Dorsolateral prefrontal cortex (tissue), 120 donors: ENCODE measurements at regions of chr15 and their contacts with region 1.

Region 1: GRCh38 chr15:89874926-89875564 is 18.7 kb downstream of the AP3S2 start:
- DNase-seq: peak; percentile 72 to 90 (median 82)
- H3K4me3 ChIP-seq: no peak overlapping the region
- H3K27ac ChIP-seq: peak overlapping the region in 1 of 59 donors; percentile 16
- H3K27me3 ChIP-seq: no peaks in the 10 kb centered on the region
- CTCF ChIP-seq: peak; percentile 64 to 98 (median 91)

Region 2: DNA sequence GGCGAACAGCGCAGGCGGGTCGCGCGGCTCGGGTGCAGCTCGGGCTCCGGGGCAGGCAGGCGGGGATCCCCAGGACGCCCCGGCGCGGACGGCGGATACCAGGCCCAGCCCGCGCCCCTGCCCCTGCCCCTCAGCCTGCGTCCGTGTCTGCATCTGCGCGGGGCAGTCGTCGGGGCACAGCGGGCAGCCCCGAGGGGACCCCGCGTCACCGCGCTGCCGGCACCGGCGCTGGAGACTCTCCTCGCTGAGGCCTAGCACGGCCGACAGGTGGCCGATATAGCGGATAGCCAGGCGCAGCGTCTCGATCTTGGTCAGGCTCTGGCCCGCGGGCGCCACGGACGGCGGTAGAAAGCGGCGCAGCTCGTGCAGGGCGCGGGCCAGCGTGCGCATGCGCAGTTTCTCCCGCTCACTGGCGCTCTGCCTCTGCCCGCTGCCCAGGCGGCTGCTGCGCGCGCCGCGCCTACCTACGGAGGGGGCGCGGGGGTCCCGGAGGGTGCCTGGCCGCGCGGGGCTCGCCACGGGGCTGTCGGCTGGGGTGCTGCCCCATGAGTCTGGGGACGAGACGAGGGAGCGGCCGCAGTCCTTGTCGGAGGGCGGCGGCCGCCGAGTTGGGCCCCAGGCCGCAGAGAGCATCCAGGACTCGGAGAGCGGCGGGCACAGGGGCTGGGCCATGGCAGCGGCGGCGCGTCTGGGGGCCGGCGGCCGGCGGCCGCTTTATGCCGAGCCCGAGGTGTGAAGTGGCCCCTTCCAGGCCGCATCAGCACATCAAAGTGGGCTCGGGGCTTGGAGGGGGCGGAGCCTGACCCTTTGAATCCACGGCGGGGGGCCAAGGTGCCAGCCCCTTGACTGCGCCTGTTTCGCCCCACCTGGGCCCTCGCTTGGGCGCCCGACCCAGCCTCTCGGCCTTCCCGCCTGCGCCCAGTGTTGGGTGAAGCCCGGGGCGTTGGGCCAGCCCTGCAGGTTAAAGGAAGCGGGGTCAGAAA is 124.2 kb before region 1 on chr15 and contains the start of gene MESP1:
- intact Hi-C with region 1: loop called in 1 of 2 experiments (anchors 5 kb)
- DNase-seq: peak; percentile 76 to 94 (median 88)
- H3K4me3 ChIP-seq: peak within 1 kb of the TSS; percentile 65 to 92 (median 77)
- H3K27ac ChIP-seq: peak within 1 kb of the TSS in 50 of 59 donors; percentile 7 to 91 (median 74)
- H3K27me3 ChIP-seq: no peaks in the 10 kb centered on the region
- CTCF ChIP-seq: peak; percentile 34 to 85 (median 68)
- total RNA-seq, gene MESP1: 5.5 to 23.3 (median 13.3) TPM

Region 3: GRCh38 chr15:89760303-89761008 is 114.6 kb before region 1 on chr15:
- intact Hi-C with region 1: loop called in 1 of 2 experiments (anchors 5 kb)
- DNase-seq: peak in 9 of 10 donors; percentile 38 to 82 (median 74)
- H3K4me3 ChIP-seq: no peak overlapping the region
- H3K27ac ChIP-seq: no peak overlapping the region
- H3K27me3 ChIP-seq: no peaks in the 10 kb centered on the region
- CTCF ChIP-seq: peak; percentile 64 to 97 (median 91)